ENCODE measurements at regions of chr1 and their contacts with region 1.

Region 1: GRCh38 chr1:1996207-1996651 is 7.4 kb downstream of the CFAP74 start:
- DNase-seq: no peak
- H3K27ac ChIP-seq: no peak overlapping the region
- CTCF ChIP-seq: no peak

Region 2: DNA sequence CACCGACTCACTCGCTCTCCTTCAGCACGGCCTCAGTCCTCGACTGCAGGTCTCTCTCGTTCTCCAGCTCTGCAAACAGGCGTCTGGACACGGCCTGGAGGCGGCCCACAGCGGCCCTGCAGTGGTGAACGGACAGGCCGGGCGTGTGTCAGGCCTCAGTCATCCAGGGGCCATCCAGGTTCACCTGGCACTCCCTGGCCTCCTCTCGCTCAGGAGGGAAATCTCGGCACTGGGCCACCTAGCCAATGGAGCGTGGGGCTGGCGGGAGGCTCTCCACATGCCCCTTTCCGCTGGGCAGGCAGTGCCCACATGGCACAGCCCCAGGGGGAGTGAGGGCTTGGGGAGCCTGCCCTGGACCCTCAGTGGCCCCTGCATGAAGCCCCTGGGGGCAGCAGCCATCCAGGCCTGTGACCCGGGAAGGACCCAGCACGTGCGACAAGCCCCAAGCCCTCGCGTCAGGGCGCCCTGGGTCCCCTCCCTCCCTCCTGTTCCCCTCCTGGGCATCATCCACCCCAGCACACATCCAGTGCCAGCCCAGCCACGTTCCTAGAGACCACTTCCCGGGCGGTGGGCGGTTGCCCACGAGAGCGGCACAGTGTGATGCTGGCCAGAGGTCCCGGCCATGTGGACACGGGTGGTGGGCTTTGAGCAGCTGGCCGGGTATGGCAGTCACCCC is 10.7 kb before region 1 on chr1:
- CTCF ChIA-PET with region 1: no interaction called
- POLR2A ChIA-PET with region 1: interaction called, 12 read pairs
- DNase-seq: no peak
- H3K27ac ChIP-seq: no peak overlapping the region
- CTCF ChIP-seq: no peak

Measured in RWPE1 (cell line).